Activated naive CD4-positive, alpha-beta T cell treated with anti-CD3 and anti-CD28 coated beads for 36 hours (primary cell): ENCODE measurements at regions of chr14 and their contacts with region 1.

Region 1: GRCh38 chr14:56474419-56475022 is 105.1 kb upstream of the TMEM260 start:
- DNase-seq: no peak
- H3K4me3 Mint-ChIP-seq: no peak overlapping the region
- H3K27ac Mint-ChIP-seq: no peak overlapping the region
- H3K4me1 Mint-ChIP-seq: no peaks in the 10 kb centered on the region
- H3K27me3 Mint-ChIP-seq: no peaks in the 10 kb centered on the region

Region 2: DNA sequence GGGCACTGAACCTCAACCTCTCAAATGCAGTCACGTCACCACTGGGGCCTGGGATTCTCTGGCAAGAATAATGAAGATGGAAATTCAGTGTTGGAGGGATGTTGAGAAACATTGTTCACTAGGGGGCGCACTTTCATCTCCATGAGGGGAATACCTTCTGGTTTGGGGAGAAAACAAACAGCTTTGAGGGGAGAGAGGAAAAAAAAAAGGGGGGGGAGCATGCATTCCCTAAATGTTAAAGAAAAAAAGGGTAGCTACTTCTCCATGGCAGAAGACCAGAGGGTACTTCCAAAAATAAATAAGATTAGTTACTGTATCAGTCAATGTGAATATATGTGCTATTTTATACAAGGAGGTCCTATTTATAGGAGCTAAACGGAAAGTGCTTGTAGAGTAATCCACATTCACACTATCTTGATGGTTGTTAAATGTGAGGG is 1028.3 kb before region 1 on chr14:
- CTCF ChIA-PET with region 1: interaction called, 12 read pairs
- intact Hi-C with region 1: loop called (anchors 5 kb)
- DNase-seq: peak; percentile 76
- H3K4me3 Mint-ChIP-seq: no peak overlapping the region
- H3K27ac Mint-ChIP-seq: no peak overlapping the region
- H3K4me1 Mint-ChIP-seq: peaks cover 13% of the 10 kb centered on the region
- H3K27me3 Mint-ChIP-seq: no peaks in the 10 kb centered on the region

Region 3: DNA sequence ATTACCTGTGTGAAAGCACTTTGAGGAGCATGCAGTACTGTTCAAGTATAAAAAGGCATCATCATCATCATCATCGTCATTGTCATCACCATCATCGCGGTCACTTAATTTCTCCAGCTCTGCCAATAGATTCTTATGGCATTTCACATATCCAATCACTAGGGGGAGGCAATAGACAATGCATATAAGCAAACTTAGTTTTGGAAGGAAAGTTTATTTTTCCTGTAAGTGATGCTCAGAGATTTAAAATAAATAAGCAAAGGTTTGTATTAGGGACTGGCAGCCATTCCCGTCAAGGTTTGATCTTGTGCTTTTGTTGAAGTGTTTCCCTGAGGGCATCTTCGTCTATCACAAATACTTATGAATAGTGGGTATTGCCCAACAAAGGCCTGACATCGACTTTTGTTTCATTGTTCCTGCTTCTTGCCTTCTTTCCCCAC is 767.1 kb before region 1 on chr14:
- CTCF ChIA-PET with region 1: interaction called, 3 read pairs
- intact Hi-C with region 1: loop called (anchors 5 kb)
- DNase-seq: no peak
- H3K4me3 Mint-ChIP-seq: no peak overlapping the region
- H3K27ac Mint-ChIP-seq: no peak overlapping the region
- H3K4me1 Mint-ChIP-seq: no peaks in the 10 kb centered on the region
- H3K27me3 Mint-ChIP-seq: no peaks in the 10 kb centered on the region

Region 4: DNA sequence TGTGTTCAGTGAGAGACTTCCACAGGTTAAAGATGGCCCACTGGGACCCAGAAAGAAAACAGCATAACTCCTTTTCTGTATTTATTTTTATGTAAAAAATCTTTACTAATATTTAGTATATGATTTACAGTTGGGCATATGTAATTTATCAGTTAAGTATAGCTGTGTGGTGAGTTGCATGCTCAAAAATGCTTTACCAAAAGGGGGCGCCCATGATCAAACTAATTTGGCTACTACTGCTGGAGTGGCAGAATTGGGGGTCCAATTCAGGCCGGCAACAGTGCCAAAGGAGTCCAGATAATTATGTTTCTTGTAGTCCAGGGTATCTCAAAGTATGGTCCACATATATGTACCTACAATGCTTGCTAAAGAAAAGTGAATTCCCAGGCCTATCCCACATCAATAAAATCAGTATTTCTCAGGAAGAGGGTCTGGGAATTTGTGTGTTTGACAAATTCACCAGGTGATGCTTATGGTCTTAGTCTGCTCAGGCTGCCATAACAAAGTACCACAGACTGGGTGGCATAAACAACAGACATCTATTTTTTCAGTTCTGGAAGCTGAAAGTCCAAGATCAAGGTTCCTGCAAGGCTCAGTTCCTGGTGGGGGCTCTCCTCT is 742.5 kb before region 1 on chr14:
- CTCF ChIA-PET with region 1: interaction called, 28 read pairs
- intact Hi-C with region 1: loop called (anchors 2 kb)
- DNase-seq: peak; percentile 77
- H3K4me3 Mint-ChIP-seq: no peak overlapping the region
- H3K27ac Mint-ChIP-seq: no peak overlapping the region
- H3K4me1 Mint-ChIP-seq: no peaks in the 10 kb centered on the region
- H3K27me3 Mint-ChIP-seq: no peaks in the 10 kb centered on the region

Region 5: GRCh38 chr14:55864890-55865655 is 609.4 kb before region 1 on chr14:
- CTCF ChIA-PET with region 1: no interaction called
- intact Hi-C with region 1: loop called (anchors 2 kb)
- DNase-seq: no peak
- H3K4me3 Mint-ChIP-seq: no peak overlapping the region
- H3K27ac Mint-ChIP-seq: no peak overlapping the region
- H3K4me1 Mint-ChIP-seq: no peaks in the 10 kb centered on the region
- H3K27me3 Mint-ChIP-seq: peaks cover 8% of the 10 kb centered on the region